MCF 10A (cell line): ENCODE measurements at regions of chr22 and their contacts with region 1.

Region 1: DNA sequence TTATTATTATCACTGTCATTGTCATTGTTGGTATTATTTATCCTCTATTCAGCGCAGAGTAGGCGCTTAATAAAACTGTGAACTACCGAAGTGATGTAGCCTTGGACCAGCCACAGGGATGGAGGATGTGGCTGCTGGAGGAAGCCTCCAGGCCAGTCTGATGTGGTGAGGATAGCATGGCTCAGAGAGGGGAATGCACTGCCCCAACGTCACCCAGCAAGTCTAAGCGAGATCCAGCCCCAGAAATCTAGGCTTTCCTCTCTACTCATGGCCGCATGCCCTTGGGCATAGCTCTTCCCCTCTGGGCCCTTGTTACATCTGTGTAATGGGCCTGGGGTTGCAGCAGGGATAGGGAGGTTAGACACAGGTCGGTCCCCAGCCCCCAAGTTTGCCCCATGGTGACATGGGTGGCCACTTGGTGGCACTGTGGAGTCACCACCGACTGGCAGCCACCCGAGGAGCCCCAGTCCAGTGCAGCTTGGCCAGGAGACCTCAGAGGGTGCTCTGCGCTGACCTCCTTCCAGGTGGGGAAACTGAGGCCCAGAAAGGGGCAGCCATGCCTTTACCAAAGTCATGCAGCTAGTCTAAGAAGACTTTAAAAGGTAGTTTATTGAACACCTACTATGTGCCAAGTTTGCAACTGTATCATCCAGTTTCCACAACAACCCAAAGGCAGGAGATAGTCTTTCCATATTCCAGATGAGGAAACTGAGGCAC is 395.7 kb downstream of the MN1 start:
- DNase-seq: peak; percentile 69
- H3K4me3 Mint-ChIP-seq: no peak overlapping the region
- H3K27ac Mint-ChIP-seq: peak overlapping the region; percentile 70
- H3K4me1 Mint-ChIP-seq: peaks cover 16% of the 10 kb centered on the region
- H3K27me3 Mint-ChIP-seq: no peaks in the 10 kb centered on the region
- CTCF ChIP-seq: peak; percentile 87

Region 2: DNA sequence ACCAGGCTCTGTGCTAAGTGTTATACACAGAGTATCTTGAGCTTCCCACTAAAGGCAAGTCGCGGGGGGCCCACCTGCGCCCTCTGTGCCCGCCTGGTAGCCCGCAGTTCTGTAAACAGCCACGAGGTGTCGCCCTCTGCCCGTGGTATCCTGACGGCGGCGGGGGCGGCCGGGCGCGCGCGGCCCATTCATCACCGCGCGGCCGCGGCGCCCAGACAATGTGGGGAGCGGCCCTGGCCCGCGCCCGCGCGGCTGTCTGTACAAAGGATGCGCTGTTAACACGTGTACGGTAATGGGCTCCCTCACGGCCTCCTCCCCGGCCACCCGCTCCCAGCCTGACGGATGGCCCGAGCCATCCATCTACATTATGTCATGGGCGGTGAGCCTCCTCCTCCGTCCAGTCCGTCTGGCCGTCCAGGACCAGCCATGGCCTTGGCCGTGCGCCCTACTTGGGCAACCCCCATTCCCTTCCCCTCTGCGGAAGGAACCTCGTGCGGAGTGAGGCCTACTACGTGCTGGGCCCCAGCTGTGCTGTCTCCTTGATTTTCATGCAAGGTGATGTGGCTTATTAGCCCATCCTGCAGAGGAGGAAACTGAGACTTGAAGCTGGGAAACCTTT is 649.0 kb before region 1 on chr22:
- CTCF ChIA-PET with region 1: no interaction called
- POLR2A ChIA-PET with region 1: no interaction called
- intact Hi-C with region 1: loop called (anchors 10 kb)
- DNase-seq: peak; percentile 11
- H3K4me3 Mint-ChIP-seq: no peak overlapping the region
- H3K27ac Mint-ChIP-seq: no peak overlapping the region
- H3K4me1 Mint-ChIP-seq: no peaks in the 10 kb centered on the region
- H3K27me3 Mint-ChIP-seq: no peaks in the 10 kb centered on the region
- CTCF ChIP-seq: peak; percentile 93

Region 3: DNA sequence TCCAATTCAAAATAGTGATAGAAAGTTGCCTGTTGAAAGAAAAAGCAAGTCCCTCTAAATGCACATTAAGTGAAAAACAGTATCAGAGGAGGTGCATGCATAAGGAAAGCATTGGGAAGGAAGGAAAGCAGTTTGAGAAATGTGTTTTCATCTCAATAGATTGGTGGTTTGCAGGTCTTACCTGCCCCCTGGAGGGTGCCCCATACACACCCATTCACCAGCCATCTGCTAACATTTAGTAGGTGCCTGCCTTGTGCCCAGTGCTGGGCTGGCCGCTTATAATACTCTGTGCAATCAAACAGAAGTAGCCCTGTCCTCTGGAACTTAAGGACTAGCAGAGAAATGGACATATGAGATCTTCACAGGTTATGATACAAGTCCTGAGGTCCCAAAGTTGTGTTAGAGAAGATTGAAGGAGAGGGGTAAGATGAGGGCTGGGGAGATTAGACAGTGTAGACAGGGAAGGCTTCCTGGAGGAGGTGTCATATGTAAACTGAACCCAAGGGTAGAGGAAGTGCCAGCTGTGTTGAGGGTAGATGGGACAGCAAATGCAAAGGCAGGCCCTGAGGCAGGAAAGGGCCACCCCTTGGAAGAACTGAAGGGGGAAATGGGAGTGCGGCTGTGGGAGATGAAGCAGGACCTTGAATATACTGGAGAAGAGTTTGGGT is 211.5 kb after region 1 on chr22:
- CTCF ChIA-PET with region 1: interaction called, 3 read pairs
- POLR2A ChIA-PET with region 1: no interaction called
- intact Hi-C with region 1: loop called (anchors 1 kb)
- DNase-seq: peak; percentile 13
- H3K4me3 Mint-ChIP-seq: no peak overlapping the region
- H3K27ac Mint-ChIP-seq: no peak overlapping the region
- H3K4me1 Mint-ChIP-seq: peaks cover 9% of the 10 kb centered on the region
- H3K27me3 Mint-ChIP-seq: no peaks in the 10 kb centered on the region
- CTCF ChIP-seq: no peak

Region 4: DNA sequence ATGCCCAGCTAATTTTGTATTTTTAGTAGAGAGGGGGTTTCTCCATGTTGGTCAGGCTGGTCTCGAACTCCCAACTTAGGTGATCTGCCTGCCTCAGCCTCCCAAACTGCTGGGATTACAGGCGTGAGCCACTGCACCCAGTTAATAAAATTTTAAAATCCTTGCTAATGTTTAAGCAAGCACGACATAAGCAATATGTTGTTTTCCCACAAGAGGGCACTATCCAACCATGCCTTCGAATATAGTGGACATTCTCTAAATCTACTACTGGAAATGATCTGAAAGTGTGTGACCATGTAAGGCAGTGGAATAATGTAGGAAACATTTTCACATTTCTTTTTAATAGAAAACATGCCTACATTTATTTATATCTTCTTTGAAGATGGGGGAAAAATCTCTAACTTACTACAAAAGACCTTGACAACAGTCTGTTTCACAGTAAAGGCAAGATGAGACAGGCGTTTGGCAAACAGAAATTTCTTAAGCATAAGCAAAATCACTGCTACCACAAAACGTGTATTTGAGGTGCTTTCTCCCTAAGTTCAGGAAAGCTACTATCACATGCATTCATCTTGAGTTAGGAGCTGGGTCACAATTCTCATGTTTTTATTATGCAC is 475.1 kb after region 1 on chr22:
- CTCF ChIA-PET with region 1: interaction called, 4 read pairs
- POLR2A ChIA-PET with region 1: no interaction called
- intact Hi-C with region 1: loop called (anchors 1 kb)
- DNase-seq: peak; percentile 64
- H3K4me3 Mint-ChIP-seq: no peak overlapping the region
- H3K27ac Mint-ChIP-seq: peak overlapping the region; percentile 39
- H3K4me1 Mint-ChIP-seq: peaks cover 17% of the 10 kb centered on the region
- H3K27me3 Mint-ChIP-seq: no peaks in the 10 kb centered on the region
- CTCF ChIP-seq: peak; percentile 46